ENCODE measurements at regions of chr6 and their contacts with region 1.

Region 1: DNA sequence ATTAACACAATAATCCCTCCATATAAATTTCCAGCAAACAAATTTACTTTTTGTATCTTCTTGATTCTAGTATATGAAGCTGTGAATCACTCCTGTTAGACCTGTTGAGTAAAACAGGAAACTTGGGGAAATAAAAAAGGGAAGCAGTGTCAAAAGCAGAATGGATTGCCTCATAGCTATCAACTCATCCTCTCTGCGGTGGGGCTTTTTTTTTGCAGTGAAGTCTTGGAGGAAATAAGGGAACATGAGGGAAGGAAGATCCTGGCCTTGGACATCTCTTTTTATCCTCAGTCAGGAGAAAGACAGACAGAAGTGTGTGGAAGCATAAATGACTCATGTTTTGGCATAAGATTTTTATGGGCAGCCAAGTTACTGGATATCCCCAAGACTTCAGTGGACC is 332.5 kb downstream of the TFAP2A start:
- DNase-seq: peak; percentile 71
- H3K4me3 Mint-ChIP-seq: no peak overlapping the region
- H3K27ac Mint-ChIP-seq: peak overlapping the region; percentile 33
- H3K4me1 Mint-ChIP-seq: peaks cover 49% of the 10 kb centered on the region
- H3K27me3 Mint-ChIP-seq: no peaks in the 10 kb centered on the region
- CTCF ChIP-seq: no peak

Region 2: DNA sequence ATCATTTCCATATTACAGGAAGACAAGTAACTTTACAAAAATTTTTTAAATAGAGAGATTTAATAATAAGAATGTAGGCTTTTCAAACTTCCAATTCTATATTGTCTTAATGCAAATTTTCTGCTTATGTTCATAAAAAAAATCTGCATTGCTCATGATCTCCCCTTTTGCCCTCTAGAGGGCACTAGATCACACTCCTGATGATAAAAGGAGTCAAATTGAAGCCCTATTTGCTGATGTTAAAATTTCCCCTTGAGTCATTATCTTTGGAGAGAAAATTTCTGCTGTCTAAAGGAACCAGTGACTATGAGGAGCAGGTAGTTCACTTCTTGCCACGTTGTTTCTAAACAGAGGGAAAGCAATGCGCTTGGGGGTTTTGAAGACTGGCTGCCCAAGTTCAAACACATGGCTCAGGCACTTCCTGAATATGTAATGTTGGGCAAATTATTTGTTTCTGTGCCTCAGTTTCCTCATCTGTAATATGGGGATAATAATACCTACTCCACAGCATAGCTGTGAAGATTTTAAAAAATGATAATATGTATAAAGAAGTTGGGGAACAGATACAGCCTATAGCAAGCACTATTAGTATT is 541.8 kb before region 1 on chr6:
- CTCF ChIA-PET with region 1: no interaction called
- POLR2A ChIA-PET with region 1: no interaction called
- intact Hi-C with region 1: loop called (anchors 5 kb)
- DNase-seq: peak; percentile 76
- H3K4me3 Mint-ChIP-seq: no peak overlapping the region
- H3K27ac Mint-ChIP-seq: no peak overlapping the region
- H3K4me1 Mint-ChIP-seq: no peaks in the 10 kb centered on the region
- H3K27me3 Mint-ChIP-seq: no peaks in the 10 kb centered on the region
- CTCF ChIP-seq: peak; percentile 59

Region 3: DNA sequence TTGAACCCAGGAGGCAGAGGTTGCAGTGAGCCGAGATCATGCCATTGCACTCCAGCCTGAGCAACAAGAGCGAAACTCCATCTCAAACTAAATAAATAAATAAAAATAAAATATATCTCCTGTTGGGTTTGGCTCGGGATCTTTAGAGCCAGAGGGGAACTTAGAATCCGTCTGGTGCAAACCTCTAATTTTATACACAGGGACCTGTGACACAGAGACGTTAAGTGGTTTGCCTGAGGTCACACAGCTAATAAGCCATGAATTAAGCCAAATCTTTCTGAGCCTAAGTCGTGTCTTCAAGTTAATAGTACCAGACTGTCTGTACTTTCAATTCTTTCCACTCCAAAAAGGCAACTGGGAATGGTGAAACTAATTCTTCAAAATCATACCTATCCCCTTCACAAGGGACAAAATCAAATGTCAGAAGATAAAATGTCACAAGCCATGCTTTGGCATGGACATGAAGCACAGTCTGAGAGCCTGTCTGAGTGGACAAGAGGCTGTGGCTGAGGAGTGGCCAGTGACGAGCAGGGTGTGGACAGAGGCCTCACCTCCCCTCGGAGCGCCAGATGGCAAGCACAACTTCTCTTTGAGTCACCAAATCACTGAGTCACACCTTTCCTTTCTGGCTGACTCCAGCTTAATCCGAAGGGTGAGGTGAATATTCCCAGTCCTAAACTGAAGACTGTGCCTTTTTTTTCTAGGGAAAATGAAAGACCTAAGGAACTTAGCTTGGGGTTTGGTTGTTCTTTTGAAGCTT is 155.1 kb after region 1 on chr6:
- CTCF ChIA-PET with region 1: interaction called, 3 read pairs
- POLR2A ChIA-PET with region 1: interaction called, 4 read pairs
- intact Hi-C with region 1: loop called (anchors 5 kb)
- DNase-seq: peak; percentile 95
- H3K4me3 Mint-ChIP-seq: no peak overlapping the region
- H3K27ac Mint-ChIP-seq: peak overlapping the region; percentile 86
- H3K4me1 Mint-ChIP-seq: peaks cover 14% of the 10 kb centered on the region
- H3K27me3 Mint-ChIP-seq: no peaks in the 10 kb centered on the region
- CTCF ChIP-seq: no peak

Measured in MCF 10A (cell line).